IMR-90 (cell line): ENCODE measurements at regions of chr9 and their contacts with region 1.

Region 1: GRCh38 chr9:127586537-127586936 is 25.5 kb upstream of the STXBP1 start:
- DNase-seq: peak; percentile 76
- ATAC-seq: peak; percentile 85
- H3K4me3 ChIP-seq: no peak overlapping the region
- H3K27ac ChIP-seq: no peak overlapping the region
- H3K4me1 ChIP-seq: peaks cover 4% of the 10 kb centered on the region
- H3K27me3 ChIP-seq: no peaks in the 10 kb centered on the region
- CTCF ChIP-seq: peak; percentile 94
- POLR2A ChIP-seq: no peak
- RAD21 ChIP-seq: peak; percentile 94

Region 2: GRCh38 chr9:127503947-127504782 is 82.4 kb before region 1 on chr9:
- CTCF ChIA-PET with region 1: interaction called, 4 read pairs
- POLR2A ChIA-PET with region 1: no interaction called
- dilution Hi-C with region 1: no loop called
- in situ Hi-C with region 1: loop called (anchors 5 kb)
- intact Hi-C with region 1: loop called (anchors 1 kb)
- DNase-seq: peak; percentile 82
- ATAC-seq: peak; percentile 72
- H3K4me3 ChIP-seq: no peak overlapping the region
- H3K27ac ChIP-seq: peak overlapping the region; percentile 47
- H3K4me1 ChIP-seq: peaks cover 7% of the 10 kb centered on the region; the same call in 1 of the 2 replicates
- H3K27me3 ChIP-seq: no peaks in the 10 kb centered on the region
- CTCF ChIP-seq: peak; percentile 85
- POLR2A ChIP-seq: 0 out of 2 replicates have a peak, but pooled peaks have one; percentile 47
- RAD21 ChIP-seq: peak; percentile 86

Region 3: DNA sequence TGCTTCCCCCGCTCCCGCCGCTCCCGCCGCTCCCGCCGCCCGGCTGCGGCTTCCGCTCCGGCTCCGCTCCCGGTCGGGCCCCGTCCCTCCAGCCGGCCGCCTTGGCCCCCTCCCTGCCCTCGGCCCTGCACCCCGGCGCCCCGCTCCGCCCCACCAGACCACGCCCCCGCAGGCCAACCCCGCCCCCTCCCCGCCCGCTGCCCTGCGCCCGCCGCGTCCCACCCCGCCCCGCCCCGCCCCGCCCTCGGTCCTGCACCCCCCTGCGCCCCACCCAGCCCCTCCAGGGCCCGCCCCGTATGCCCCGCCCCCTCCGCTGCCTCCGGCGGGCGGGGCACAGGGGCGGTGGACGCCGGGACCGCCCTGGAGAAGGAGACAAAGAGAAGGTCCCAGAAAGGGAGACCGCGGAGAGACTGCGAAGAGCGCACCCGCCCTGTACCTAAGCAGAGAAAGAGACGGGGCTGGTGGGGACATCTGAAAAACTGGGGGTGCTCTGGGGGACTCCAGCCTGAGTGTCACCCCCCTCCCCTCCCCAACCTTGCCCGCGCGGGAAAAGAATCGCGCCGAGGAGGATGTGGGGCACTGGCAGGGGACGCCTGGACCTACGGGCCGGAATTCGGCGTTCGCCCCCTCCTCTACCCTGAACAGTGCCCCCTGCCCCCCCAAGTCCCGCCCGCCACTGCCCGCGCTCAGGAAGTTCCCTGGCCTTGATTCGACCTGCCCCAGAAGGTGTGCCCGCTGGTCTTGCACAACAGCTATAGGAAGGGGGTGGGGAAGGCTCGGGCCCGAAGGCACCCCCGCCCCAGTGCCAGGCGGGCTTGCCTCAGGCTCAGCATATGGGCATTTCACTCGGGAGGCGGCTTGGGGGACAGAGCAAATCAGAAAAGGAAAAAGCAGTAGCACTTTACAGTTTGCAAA is 17.3 kb before region 1 on chr9:
- CTCF ChIA-PET with region 1: no interaction called
- POLR2A ChIA-PET with region 1: interaction called, 11 read pairs
- dilution Hi-C with region 1: no loop called
- in situ Hi-C with region 1: no loop called
- intact Hi-C with region 1: no loop called
- DNase-seq: peak; percentile 72
- ATAC-seq: peak; percentile 81
- H3K4me3 ChIP-seq: peak overlapping the region; percentile 92
- H3K27ac ChIP-seq: peak overlapping the region; percentile 100
- H3K4me1 ChIP-seq: peaks cover 39% of the 10 kb centered on the region
- H3K27me3 ChIP-seq: no peaks in the 10 kb centered on the region
- CTCF ChIP-seq: no peak
- POLR2A ChIP-seq: peak; percentile 78
- RAD21 ChIP-seq: no peak

Region 4: GRCh38 chr9:127644943-127645342 is 58.4 kb after region 1 on chr9:
- CTCF ChIA-PET with region 1: no interaction called
- POLR2A ChIA-PET with region 1: no interaction called
- dilution Hi-C with region 1: no loop called
- in situ Hi-C with region 1: no loop called
- intact Hi-C with region 1: no loop called
- DNase-seq: no peak
- ATAC-seq: no peak
- H3K4me3 ChIP-seq: no peak overlapping the region
- H3K27ac ChIP-seq: no peak overlapping the region
- H3K4me1 ChIP-seq: no peaks in the 10 kb centered on the region
- H3K27me3 ChIP-seq: no peaks in the 10 kb centered on the region
- CTCF ChIP-seq: no peak
- POLR2A ChIP-seq: no peak
- RAD21 ChIP-seq: no peak

Region 5: GRCh38 chr9:127734747-127735529 is 148.4 kb after region 1 on chr9 and contains the start of gene TOR2A:
- CTCF ChIA-PET with region 1: interaction called, 12 read pairs
- POLR2A ChIA-PET with region 1: interaction called, 12 read pairs
- dilution Hi-C with region 1: no loop called
- in situ Hi-C with region 1: no loop called
- intact Hi-C with region 1: loop called (anchors 1 kb)
- DNase-seq: peak; percentile 95
- ATAC-seq: peak; percentile 96
- H3K4me3 ChIP-seq: peak within 1 kb of the TSS; percentile 60
- H3K27ac ChIP-seq: peak within 1 kb of the TSS; percentile 74
- H3K4me1 ChIP-seq: peaks cover 6% of the 10 kb centered on the region
- H3K27me3 ChIP-seq: 0 out of 2 replicates have a peak, but pooled peaks cover 3% of the 10 kb centered on the region
- CTCF ChIP-seq: peak; percentile 99
- POLR2A ChIP-seq: peak; percentile 73
- RAD21 ChIP-seq: peak; percentile 93
- total RNA-seq, gene TOR2A: 0.90 and 1.1 TPM in 2 replicates